Testis (tissue), 5 donors: ENCODE measurements at regions of chr9 and their contacts with region 1.

Region 1: DNA sequence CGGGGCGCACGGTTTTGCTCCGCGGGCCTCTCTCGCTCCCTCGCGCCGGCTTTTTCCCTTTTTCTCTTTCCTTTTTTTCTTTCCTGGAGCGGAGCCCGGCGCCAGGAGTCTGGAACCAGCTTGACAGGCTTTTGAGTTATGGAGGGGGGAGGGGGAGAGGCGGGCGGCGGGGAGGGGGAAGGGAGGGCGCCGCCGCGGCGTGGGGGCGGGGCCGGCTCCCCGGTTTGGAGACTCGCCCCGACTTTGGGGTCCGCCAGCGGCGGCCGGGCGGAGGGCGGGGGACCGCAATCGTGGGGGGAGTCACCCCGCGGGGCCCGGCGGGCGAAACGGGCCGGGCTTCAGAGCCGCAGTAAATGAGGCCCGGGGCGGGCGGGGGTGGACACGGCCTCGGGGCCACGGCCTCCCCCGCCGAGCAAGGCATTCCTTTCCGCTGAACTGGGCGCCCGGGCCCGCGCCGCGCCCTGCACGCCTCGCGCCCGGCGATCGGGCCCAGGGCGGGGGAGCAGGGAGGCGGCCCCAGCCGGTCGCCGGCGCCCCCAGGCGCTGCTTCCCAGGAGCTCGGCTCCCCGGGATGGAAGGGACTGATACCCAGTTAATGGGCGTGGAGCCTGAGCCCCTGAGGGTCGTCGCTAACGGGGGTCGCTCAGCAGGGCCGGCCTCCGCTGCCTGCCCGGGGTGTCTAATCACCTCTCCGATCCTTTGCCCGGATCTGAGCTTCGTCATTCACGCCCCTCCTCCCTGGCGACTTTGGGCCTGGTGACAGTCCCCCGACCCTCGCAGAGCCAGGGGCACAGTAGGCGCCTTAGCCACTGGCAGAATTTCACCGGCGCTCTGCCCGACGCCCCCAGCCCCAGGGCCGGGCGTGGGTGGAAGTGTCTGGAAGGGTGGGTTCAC is 138.1 kb downstream of the C9orf50 start:
- DNase-seq: peak; percentile 87
- H3K4me3 ChIP-seq: peak overlapping the region; percentile 50 to 70
- H3K27ac ChIP-seq: peak overlapping the region; percentile 97 to 99
- H3K4me1 ChIP-seq: peaks cover 79% of the 10 kb centered on the region
- H3K27me3 ChIP-seq: no peaks in the 10 kb centered on the region
- CTCF ChIP-seq: no peak
- POLR2A ChIP-seq: no peak

Region 2: GRCh38 chr9:128947422-128948301 is 535.1 kb before region 1 on chr9 and contains the starts of genes DOLK and NUP188:
- intact Hi-C with region 1: no loop called
- DNase-seq: peak; percentile 97
- H3K4me3 ChIP-seq: peak within 1 kb of the TSS; percentile 72 to 91
- H3K27ac ChIP-seq: peak within 1 kb of the TSS; percentile 80 to 96
- H3K4me1 ChIP-seq: peaks cover 12% of the 10 kb centered on the region
- H3K27me3 ChIP-seq: no peaks in the 10 kb centered on the region
- CTCF ChIP-seq: no peak
- POLR2A ChIP-seq: peak; percentile 33
- total RNA-seq, gene DOLK: 26.4 to 29.4 TPM
- total RNA-seq, gene NUP188: 165 to 184 TPM

Region 3: DNA sequence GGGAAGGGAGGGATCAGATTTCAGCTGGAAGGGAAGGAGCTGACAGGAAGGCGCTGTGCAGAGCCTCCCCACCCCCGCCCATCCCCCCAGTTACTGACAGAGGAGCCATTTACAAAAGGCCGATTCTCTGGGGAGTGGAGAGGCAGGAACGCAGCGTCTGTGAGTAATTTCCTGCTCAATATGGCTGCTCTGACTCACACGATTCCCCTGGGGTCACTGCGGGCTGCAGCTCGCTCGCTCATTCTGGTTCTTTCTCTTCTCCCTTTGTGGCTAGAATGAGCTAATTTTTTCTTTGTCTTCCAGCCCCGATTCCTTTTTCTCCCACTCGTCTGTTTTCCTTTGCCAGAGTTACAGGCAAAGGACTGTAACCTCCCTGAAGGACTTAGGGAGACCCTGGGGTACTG is 342.8 kb before region 1 on chr9:
- intact Hi-C with region 1: loop called (anchors 10 kb)
- DNase-seq: peak; percentile 94
- H3K4me3 ChIP-seq: peak overlapping the region in 1 of 2 donors; percentile 9
- H3K27ac ChIP-seq: peak overlapping the region; percentile 96 to 98
- H3K4me1 ChIP-seq: peaks cover 71% of the 10 kb centered on the region
- H3K27me3 ChIP-seq: no peaks in the 10 kb centered on the region
- CTCF ChIP-seq: no peak
- POLR2A ChIP-seq: no peak

Region 4: GRCh38 chr9:129413537-129414376 is 69.0 kb before region 1 on chr9:
- intact Hi-C with region 1: no loop called
- DNase-seq: peak; percentile 99
- H3K4me3 ChIP-seq: peak overlapping the region; percentile 68 to 78
- H3K27ac ChIP-seq: peak overlapping the region; percentile 99 to 100
- H3K4me1 ChIP-seq: peaks cover 31% of the 10 kb centered on the region
- H3K27me3 ChIP-seq: no peaks in the 10 kb centered on the region
- CTCF ChIP-seq: peak in 1 of 3 experiments; percentile 26
- POLR2A ChIP-seq: no peak